ENCODE measurements at regions of chr15 and their contacts with region 1.

Region 1: DNA sequence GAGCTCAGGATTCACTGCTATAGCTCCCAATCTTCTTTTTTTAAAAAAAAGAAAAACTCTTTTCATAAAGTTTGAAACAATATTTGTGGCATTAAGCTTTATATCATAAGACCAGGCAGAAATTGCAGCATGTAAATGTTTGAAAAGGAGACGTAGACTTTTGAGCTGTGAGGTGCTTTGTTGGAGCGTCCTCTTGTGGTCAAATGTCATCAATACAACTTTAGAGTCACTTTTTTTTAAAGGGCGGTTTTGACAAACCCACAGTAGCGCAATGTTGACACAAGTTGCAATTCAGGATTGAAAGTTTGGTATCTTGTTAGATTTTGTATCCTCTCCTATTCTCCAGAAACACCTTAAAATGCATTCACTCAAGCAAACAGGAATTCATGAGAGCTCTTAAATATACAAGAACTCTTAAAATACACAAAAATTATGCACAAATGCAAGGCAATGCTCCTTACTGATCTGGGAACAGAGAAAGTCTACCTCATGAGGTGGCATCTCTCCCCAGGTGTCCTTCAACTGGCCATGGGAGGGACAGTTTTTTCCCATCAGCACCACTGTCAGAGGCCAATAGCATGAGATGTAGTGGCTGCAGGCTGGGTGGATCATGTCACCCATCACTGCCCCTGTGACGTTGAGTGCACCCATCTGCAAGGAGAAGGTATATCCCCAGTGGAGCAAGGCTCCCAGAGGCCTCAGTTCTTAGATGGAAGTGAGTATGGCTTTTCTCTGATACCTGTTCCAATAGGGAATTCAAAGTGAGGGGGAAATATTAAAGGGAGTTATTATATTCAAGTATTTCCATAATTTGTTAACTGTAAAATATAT is 70.7 kb downstream of the ANXA2 start:
- DNase-seq: no peak
- H3K4me3 ChIP-seq: no peak overlapping the region
- H3K27ac ChIP-seq: no peak overlapping the region
- H3K4me1 ChIP-seq: peaks cover 0 to 5% (median 1%) of the 10 kb centered on the region in 4 experiments; a peak in 2 of 7 replicates
- H3K27me3 ChIP-seq: no peaks in the 10 kb centered on the region
- CTCF ChIP-seq: peak in 2 of 3 experiments; percentile 78 to 85; a peak in 3 of 4 replicates
- EP300 ChIP-seq: no peak
- POLR2A ChIP-seq: no peak
- RAD21 ChIP-seq: peak; percentile 97 to 99

Region 2: DNA sequence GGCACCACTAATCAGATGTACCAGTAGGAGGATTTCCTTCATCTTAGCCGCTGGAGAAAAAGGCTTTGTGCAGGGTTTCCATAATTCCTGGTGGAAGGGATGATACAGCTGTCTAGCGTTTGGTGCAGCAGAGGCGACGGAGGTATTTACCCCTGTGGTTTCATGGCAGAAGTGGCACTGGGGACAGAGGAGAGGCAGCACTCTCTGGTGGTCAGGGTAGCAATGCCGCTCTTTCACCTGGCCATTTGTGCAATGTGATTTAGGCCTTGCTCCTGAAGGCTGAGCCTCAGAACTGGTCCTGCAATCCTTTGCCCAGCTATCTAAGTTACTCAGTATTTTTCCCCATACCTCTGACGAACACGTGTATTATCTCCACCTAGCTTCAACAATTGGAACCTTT is 590.9 kb before region 1 on chr15:
- CTCF ChIA-PET with region 1: interaction called, 54 read pairs
- POLR2A ChIA-PET with region 1: no interaction called
- DNase-seq: no peak
- H3K4me3 ChIP-seq: no peak overlapping the region
- H3K27ac ChIP-seq: no peak overlapping the region
- H3K4me1 ChIP-seq: no peaks in the 10 kb centered on the region
- H3K27me3 ChIP-seq: no peaks in the 10 kb centered on the region
- CTCF ChIP-seq: peak; percentile 54 to 63 (median 56)
- EP300 ChIP-seq: no peak
- POLR2A ChIP-seq: no peak
- RAD21 ChIP-seq: peak; percentile 44 to 49

Region 3: DNA sequence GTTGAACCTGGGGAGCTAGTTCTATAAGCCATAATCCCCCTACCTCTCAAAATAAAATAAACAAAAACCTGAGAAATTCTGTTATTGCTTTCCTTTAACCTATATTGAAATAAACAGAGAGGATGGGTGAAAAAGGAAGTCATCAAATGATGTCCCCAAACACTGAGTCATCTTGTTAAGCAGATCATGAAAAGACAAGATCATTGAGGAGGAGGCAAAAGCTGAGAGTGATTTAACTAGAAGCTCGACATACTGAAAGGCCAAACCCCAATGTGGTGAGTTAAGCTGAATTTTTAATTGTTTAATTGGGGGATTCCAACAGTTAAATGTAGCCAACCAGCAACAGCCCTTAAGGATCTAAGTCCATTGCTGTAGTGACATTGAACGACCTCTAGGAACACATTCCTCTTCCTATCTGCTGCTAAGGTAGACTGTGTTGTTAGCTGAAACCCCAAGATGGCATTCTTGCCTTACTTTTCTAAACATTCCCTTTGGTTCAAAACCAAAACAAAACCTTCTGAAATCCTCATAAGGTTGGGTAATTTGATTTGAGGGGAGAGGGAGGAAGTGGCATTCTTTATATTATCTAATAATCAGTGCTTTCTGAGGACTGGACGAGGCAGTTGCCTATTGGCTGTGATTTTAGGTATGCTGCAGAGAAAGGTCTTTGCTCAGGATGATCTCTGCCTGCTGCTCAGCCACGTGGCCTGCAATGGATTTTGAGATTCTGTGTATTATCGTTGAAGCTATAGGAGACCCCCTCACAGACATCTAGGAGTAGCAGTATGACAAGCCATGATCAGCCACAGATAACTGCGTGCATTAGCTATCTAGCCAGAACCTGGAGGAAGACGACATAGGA is 575.3 kb before region 1 on chr15:
- CTCF ChIA-PET with region 1: interaction called, 120 read pairs
- POLR2A ChIA-PET with region 1: no interaction called
- DNase-seq: no peak
- H3K4me3 ChIP-seq: no peak overlapping the region
- H3K27ac ChIP-seq: no peak overlapping the region
- H3K4me1 ChIP-seq: peaks cover 0 to 3% (median 0%) of the 10 kb centered on the region in 4 experiments; a peak in 1 of 7 replicates
- H3K27me3 ChIP-seq: no peaks in the 10 kb centered on the region; a peak in 1 of 7 replicates
- CTCF ChIP-seq: peak in 2 of 3 experiments; percentile 91 to 99; a peak in 3 of 4 replicates
- EP300 ChIP-seq: no peak
- POLR2A ChIP-seq: no peak
- RAD21 ChIP-seq: peak; percentile 91 to 92

Region 4: GRCh38 chr15:60128000-60128376 is 199.1 kb before region 1 on chr15:
- CTCF ChIA-PET with region 1: interaction called, 10 read pairs
- POLR2A ChIA-PET with region 1: no interaction called
- DNase-seq: no peak
- H3K4me3 ChIP-seq: peak overlapping the region; percentile 19 to 47 (median 24); a peak in 4 of 8 replicates
- H3K27ac ChIP-seq: no peak overlapping the region
- H3K4me1 ChIP-seq: peaks cover 0 to 14% (median 7%) of the 10 kb centered on the region in 4 experiments; a peak in 5 of 7 replicates
- H3K27me3 ChIP-seq: no peaks in the 10 kb centered on the region
- CTCF ChIP-seq: no peak
- EP300 ChIP-seq: no peak
- POLR2A ChIP-seq: no peak
- RAD21 ChIP-seq: no peak

Region 5: GRCh38 chr15:60223176-60223575 is 103.9 kb before region 1 on chr15:
- CTCF ChIA-PET with region 1: interaction called, 23 read pairs
- POLR2A ChIA-PET with region 1: no interaction called
- DNase-seq: no peak
- H3K4me3 ChIP-seq: no peak overlapping the region
- H3K27ac ChIP-seq: no peak overlapping the region
- H3K4me1 ChIP-seq: no peaks in the 10 kb centered on the region
- H3K27me3 ChIP-seq: no peaks in the 10 kb centered on the region
- CTCF ChIP-seq: no peak
- EP300 ChIP-seq: no peak
- POLR2A ChIP-seq: no peak
- RAD21 ChIP-seq: no peak

Region 6: DNA sequence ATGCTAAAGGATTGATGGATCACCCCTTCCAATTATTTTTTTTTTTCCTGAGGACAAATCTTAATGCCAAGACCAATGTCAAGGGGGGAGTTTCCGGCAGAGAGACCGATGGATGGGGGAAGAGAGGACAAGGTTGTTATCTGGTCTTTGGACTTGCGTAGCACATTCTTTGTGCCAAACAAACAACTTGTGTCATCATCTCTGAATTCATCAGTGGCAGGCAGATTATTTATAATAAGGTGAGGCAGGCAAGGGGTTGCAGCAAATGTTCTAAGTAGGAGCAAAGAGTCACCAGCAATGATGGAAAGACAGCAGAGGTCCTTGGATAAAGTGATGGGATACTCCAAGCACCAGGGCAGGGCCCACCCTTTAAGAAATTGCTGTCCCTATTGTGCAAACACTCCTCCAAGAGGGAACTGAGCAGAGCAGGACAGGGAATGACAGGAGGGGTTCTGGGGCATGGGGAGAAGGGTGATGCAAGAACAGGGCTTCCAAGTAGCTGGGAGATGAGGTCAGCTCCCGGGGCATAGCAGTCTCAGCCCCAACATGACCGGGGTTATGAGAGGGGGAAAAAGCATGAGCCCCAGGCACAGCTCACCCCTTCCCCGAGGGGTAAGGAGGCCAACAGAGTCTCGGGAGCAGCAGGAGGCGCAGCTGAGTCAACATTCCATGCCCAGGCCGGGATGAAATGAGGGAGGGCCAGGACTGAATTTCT is 13.3 kb after region 1 on chr15:
- CTCF ChIA-PET with region 1: interaction called, 37 read pairs
- POLR2A ChIA-PET with region 1: no interaction called
- DNase-seq: no peak
- H3K4me3 ChIP-seq: no peak overlapping the region
- H3K27ac ChIP-seq: no peak overlapping the region
- H3K4me1 ChIP-seq: peaks cover 3 to 7% (median 4%) of the 10 kb centered on the region in 4 experiments; a peak in 6 of 7 replicates
- H3K27me3 ChIP-seq: no peaks in the 10 kb centered on the region
- CTCF ChIP-seq: peak; percentile 20 to 35 (median 31)
- EP300 ChIP-seq: no peak
- POLR2A ChIP-seq: no peak
- RAD21 ChIP-seq: peak; percentile 21 to 45; a peak in 3 of 4 replicates

Region 7: GRCh38 chr15:60370869-60371700 is 44.0 kb after region 1 on chr15:
- CTCF ChIA-PET with region 1: no interaction called
- POLR2A ChIA-PET with region 1: no interaction called
- DNase-seq: no peak
- H3K4me3 ChIP-seq: no peak overlapping the region
- H3K27ac ChIP-seq: no peak overlapping the region
- H3K4me1 ChIP-seq: peaks cover 2 to 5% (median 5%) of the 10 kb centered on the region in 4 experiments; a peak in 5 of 7 replicates
- H3K27me3 ChIP-seq: no peaks in the 10 kb centered on the region
- CTCF ChIP-seq: no peak
- EP300 ChIP-seq: no peak
- POLR2A ChIP-seq: no peak
- RAD21 ChIP-seq: no peak

Measured in H1 (cell line).